ENCODE measurements at regions of chrX and their contacts with region 1.

Region 1: GRCh38 chrX:101799387-101799786 is 132.4 kb downstream of the ZMAT1 start:
- DNase-seq: peak; percentile 82 to 84
- ATAC-seq: peak; percentile 90
- H3K4me3 ChIP-seq: peak overlapping the region in 1 of 2 donors; percentile 26
- H3K27ac ChIP-seq: no peak overlapping the region
- H3K4me1 ChIP-seq: no peaks in the 10 kb centered on the region
- H3K27me3 ChIP-seq: no peaks in the 10 kb centered on the region

Region 2: DNA sequence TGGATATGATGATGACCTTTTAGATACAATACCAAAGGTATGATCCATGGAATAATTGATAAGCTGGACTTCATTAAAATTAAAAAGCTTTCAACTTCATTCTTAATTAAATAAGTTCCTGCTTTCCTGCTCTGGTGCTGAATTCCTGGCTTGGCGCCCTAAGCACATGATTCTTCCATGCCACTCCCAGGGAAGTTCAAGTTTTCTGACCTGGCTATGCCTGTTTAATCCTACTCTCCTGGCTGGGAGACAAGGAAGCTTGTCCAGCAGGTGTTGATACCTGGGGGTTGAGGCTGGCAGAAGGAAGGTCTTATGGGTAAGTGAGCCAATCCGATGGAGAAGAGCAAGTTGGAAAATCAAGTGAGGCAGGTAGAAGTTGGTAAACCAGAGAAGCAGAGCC is 895.0 kb before region 1 on chrX:
- intact Hi-C with region 1: no loop called
- DNase-seq: no peak
- ATAC-seq: no peak
- H3K4me3 ChIP-seq: no peak overlapping the region
- H3K27ac ChIP-seq: no peak overlapping the region
- H3K4me1 ChIP-seq: no peaks in the 10 kb centered on the region
- H3K27me3 ChIP-seq: no peaks in the 10 kb centered on the region

Region 3: DNA sequence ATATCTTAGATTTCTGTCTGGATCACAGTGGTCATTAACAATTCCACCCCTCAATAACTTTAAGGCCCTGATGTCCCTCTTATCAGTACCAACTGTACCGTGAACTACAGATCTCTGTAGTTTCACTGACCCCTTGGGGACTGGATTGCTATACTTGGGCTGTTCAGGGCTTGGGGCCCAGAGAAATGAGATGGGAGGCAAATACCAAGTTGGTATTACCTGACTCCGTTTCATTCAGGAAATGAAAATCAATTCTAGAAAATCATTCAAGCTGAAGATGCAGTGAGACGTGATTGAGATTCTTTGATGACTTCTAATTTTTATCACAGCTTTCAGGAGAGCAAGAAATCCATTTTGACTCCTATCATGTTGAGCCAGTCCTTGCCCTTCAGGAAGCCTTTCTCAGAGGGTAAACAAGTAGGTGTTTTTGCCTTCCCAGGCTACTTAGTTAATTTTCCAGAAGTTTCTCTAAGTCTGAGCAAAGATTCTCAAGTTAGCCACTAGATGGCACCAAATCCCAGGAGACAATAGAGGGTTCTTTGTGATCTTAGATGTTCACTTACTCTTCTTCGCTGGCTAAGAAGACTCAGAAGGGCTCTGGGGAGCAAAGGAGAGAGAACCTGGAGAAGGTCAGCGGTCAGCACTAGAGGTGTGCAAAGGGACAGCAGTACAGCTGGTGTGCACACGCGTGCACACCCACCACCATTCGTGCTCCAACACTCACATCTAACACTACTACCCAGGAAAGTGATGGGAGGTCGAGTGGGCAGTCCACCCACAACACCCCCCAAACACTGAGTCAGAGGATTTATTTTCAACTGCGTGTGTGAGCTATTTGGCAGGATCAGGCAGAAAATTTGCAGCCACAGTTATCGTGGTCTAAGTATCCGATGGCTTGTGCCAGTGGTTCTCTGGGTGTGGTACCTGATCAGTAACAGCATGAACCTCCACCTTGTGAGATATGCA is 383.9 kb before region 1 on chrX:
- intact Hi-C with region 1: loop called (anchors 2 to 5 kb)
- DNase-seq: no peak
- ATAC-seq: peak; percentile 55
- H3K4me3 ChIP-seq: no peak overlapping the region
- H3K27ac ChIP-seq: peak overlapping the region in 1 of 2 donors; percentile 71
- H3K4me1 ChIP-seq: no peaks in the 10 kb centered on the region
- H3K27me3 ChIP-seq: no peaks in the 10 kb centered on the region

Region 4: GRCh38 chrX:101595739-101596419 is 203.5 kb before region 1 on chrX:
- intact Hi-C with region 1: loop called (anchors 5 kb)
- DNase-seq: no peak
- ATAC-seq: peak; percentile 65
- H3K4me3 ChIP-seq: no peak overlapping the region
- H3K27ac ChIP-seq: no peak overlapping the region
- H3K4me1 ChIP-seq: no peaks in the 10 kb centered on the region
- H3K27me3 ChIP-seq: no peaks in the 10 kb centered on the region

Region 5: DNA sequence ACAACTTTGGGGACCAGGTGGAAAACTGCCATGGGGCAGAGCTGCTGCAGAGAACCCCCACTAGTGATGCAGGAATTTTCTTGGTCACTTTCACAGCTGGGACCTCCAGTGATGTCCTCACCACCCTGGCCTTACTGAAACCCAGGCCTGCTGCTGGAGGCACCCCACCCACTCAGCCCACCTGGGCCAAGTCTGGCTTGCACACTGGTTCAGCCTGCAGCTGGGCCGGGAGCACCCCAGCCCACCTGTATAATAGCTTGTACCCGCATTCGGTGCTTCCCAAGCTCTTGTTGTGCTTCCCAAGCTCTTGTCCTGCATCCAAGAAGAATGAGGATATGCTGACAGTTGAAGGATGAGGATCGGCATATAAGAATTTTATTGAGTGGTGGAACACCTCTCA is 218.8 kb after region 1 on chrX:
- intact Hi-C with region 1: no loop called
- DNase-seq: no peak
- ATAC-seq: no peak
- H3K4me3 ChIP-seq: no peak overlapping the region
- H3K27ac ChIP-seq: no peak overlapping the region
- H3K4me1 ChIP-seq: no peaks in the 10 kb centered on the region
- H3K27me3 ChIP-seq: no peaks in the 10 kb centered on the region

Measured in aorta (tissue), 5 donors.